ENCODE measurements at regions of chr1 and their contacts with region 1.

Region 1: GRCh38 chr1:38873027-38873969 is at the start of gene MYCBP:
- DNase-seq: peak; percentile 96 to 99 (median 98)
- H3K4me3 ChIP-seq: peak within 1 kb of the TSS; percentile 77 to 81
- H3K4me3 Mint-ChIP-seq: peak within 1 kb of the TSS; percentile 88 to 95 (median 92)
- H3K27ac ChIP-seq: peak within 1 kb of the TSS; percentile 79
- H3K27ac Mint-ChIP-seq: peak within 1 kb of the TSS; percentile 88 to 94 (median 93)
- H3K4me1 ChIP-seq: peaks cover 35% of the 10 kb centered on the region
- H3K4me1 Mint-ChIP-seq: peaks cover 16 to 34% (median 25%) of the 10 kb centered on the region in 4 donors
- H3K27me3 ChIP-seq: no peaks in the 10 kb centered on the region
- H3K27me3 Mint-ChIP-seq: no peaks in the 10 kb centered on the region
- total RNA-seq, gene MYCBP: 13.4 to 15.4 TPM

Region 2: GRCh38 chr1:38990738-38991639 is 117.7 kb after region 1 on chr1 and contains the start of gene AKIRIN1:
- CTCF ChIA-PET with region 1: no interaction called
- POLR2A ChIA-PET with region 1: no interaction called
- intact Hi-C with region 1: loop called (anchors 1 kb)
- DNase-seq: peak; percentile 87 to 95 (median 89)
- H3K4me3 ChIP-seq: peak within 1 kb of the TSS; percentile 52 to 67
- H3K4me3 Mint-ChIP-seq: peak within 1 kb of the TSS; percentile 88 to 94 (median 92)
- H3K27ac ChIP-seq: peak within 1 kb of the TSS; percentile 93
- H3K27ac Mint-ChIP-seq: peak within 1 kb of the TSS; percentile 87 to 93 (median 91)
- H3K4me1 ChIP-seq: peaks cover 47% of the 10 kb centered on the region
- H3K4me1 Mint-ChIP-seq: peaks cover 21 to 52% (median 37%) of the 10 kb centered on the region in 4 donors
- H3K27me3 ChIP-seq: no peaks in the 10 kb centered on the region
- H3K27me3 Mint-ChIP-seq: no peaks in the 10 kb centered on the region
- total RNA-seq, gene AKIRIN1: 79.6 to 84.9 TPM

Measured in CD4-positive, alpha-beta memory T cell (primary cell).